Naive thymus-derived CD8-positive, alpha-beta T cell (primary cell): ENCODE measurements at regions of chr13 and their contacts with region 1.

Region 1: DNA sequence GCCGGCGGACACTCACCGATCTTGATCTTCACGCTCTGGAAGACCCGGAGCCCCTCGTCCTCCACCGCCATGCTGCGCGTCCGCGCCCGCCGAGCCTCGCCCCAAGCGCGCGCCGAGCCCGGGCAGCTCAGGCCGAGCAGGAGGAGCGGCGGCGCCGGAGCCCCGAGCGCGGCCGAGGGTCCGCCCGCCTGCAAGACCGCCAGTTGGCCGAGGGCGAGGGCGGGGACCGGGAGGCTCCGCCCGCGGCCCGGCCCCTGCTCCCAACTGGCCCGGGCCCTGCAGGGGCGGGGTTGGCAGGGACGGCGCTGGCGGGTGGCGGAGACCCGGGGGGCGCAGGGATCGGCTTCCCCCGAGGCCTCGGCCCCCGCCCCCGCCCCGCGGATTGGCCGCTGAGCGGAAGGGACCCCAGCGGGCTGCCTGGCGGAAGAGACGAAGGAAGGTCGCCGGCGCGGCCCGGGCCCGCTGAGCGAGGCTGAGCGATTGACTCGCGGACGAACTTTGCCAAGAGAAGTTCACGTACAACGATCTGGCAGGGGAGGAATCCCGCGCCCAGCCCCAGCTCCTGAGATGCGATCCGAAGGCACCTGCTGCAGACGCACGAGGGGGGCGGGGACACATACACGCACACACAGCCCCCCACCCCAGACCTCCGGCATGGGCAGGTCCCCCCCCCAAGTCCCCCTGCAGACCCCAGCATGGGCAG is at the start of gene RASA3:
- DNase-seq: peak; percentile 45 to 77 (median 62)
- ATAC-seq: peak; percentile 27 to 40
- H3K4me3 Mint-ChIP-seq: peak within 1 kb of the TSS; percentile 94 to 100 (median 98)
- H3K27ac Mint-ChIP-seq: peak within 1 kb of the TSS; percentile 88 to 100 (median 98)
- H3K4me1 Mint-ChIP-seq: peaks cover 37 to 67% (median 58%) of the 10 kb centered on the region in 4 donors
- H3K27me3 Mint-ChIP-seq: peaks cover 0 to 2% (median 0%) of the 10 kb centered on the region in 5 donors
- polyA plus RNA-seq, gene RASA3: 62.2 to 169 (median 105) TPM

Region 2: GRCh38 chr13:114065141-114065925 is 67.2 kb before region 1 on chr13:
- POLR2A ChIA-PET with region 1: interaction called, 21 read pairs
- DNase-seq: peak; percentile 39 to 77 (median 62)
- ATAC-seq: peak; percentile 70 to 74
- H3K4me3 Mint-ChIP-seq: peak overlapping the region; percentile 84 to 93 (median 86)
- H3K27ac Mint-ChIP-seq: peak overlapping the region; percentile 91 to 99 (median 96)
- H3K4me1 Mint-ChIP-seq: peaks cover 36 to 70% (median 67%) of the 10 kb centered on the region in 4 donors
- H3K27me3 Mint-ChIP-seq: no peaks in the 10 kb centered on the region

Region 3: DNA sequence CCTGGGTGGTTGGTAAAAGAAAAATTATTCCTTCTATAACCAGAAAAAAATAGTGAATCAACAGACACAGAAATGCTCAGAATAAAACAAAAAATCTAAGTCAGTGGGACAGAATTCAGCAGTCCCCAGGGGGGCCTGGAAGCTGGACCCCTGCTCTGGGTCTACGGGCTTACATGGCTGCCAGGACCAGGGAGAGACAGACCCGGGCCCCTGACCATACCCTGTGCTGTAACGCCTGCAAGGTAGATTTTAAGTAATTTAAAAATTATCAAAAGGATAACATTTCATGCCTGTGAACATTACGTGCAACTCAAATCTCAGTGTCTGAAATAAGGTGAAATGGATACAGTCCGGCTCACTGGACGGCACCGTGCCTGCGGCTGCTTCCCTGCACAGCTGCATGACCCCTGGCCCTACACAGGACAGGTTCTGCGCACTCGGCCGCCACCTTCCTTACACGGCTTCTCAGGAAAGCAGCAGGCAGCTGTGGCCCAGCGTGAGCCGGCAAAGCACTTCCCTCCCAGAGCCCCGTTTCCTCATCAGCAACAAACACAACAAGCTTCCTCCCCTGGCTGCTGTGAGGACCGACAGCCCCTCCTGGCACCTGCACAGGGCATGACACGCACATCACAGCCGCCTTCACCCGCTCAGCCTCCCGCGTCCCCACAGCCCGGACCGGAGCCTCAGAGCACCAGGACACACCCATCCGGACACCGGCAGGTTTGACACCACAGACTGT is 22.3 kb before region 1 on chr13:
- POLR2A ChIA-PET with region 1: interaction called, 207 read pairs
- DNase-seq: peak; percentile 64 to 92 (median 83)
- ATAC-seq: peak; percentile 82 to 87
- H3K4me3 Mint-ChIP-seq: peak overlapping the region; percentile 78 to 92 (median 86)
- H3K27ac Mint-ChIP-seq: peak overlapping the region; percentile 95 to 99 (median 98)
- H3K4me1 Mint-ChIP-seq: peaks cover 43 to 86% (median 82%) of the 10 kb centered on the region in 4 donors
- H3K27me3 Mint-ChIP-seq: peaks cover 0 to 1% (median 0%) of the 10 kb centered on the region in 5 donors

Region 4: DNA sequence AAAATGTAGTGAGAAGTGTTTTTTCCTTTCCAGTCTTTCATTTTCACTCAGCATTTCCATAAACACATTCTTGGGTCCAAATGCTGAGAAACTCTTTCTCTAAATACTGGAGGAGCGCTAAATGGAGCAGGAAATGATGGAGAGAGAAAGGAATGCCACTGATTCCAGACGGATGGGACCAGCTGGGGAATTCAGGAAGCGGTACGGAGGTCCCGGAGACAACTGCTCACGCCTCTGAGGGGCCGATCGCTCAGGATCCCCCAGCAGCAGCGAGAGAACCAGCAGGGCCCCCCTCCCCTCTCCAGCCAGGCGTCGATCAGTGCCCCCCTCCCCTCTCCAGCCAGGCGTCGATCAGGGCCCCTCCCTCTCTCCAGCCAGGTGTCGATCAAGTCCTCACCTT is 13.4 kb before region 1 on chr13:
- POLR2A ChIA-PET with region 1: interaction called, 207 read pairs
- DNase-seq: peak in 1 of 10 donors; percentile 11
- ATAC-seq: no peak
- H3K4me3 Mint-ChIP-seq: peak overlapping the region; percentile 56 to 88 (median 76)
- H3K27ac Mint-ChIP-seq: peak overlapping the region; percentile 81 to 95 (median 88)
- H3K4me1 Mint-ChIP-seq: peaks cover 43 to 84% (median 79%) of the 10 kb centered on the region in 4 donors
- H3K27me3 Mint-ChIP-seq: peaks cover 0 to 1% (median 0%) of the 10 kb centered on the region in 5 donors

Region 5: GRCh38 chr13:114151565-114152284 is 19.2 kb after region 1 on chr13:
- POLR2A ChIA-PET with region 1: interaction called, 191 read pairs
- DNase-seq: peak in 8 of 10 donors; percentile 33 to 82 (median 60)
- ATAC-seq: peak; percentile 26
- H3K4me3 Mint-ChIP-seq: peak overlapping the region; percentile 65 to 84 (median 79)
- H3K27ac Mint-ChIP-seq: peak overlapping the region in 9 of 10 donors; percentile 97 to 100 (median 99)
- H3K4me1 Mint-ChIP-seq: peaks cover 40 to 81% (median 77%) of the 10 kb centered on the region in 4 donors
- H3K27me3 Mint-ChIP-seq: no peaks in the 10 kb centered on the region

Region 6: DNA sequence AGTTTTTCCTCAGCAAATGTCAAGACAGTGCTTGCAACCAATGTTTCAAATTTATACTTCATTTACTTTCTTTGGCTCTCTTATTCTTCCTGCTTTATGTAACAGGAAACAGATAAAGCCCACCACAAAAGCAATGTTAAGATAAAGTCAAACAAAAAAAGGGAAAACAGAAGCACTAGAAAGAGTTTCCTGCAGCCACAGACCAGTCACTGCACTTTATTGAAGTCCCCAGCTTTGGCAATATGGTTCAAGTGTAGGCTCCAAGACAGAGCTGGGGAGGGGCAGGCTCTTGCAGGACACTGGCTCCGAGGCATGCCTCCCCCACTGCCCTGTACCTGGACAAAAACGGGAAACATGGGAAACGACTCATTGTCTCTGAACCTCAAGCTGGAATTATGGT is 86.8 kb after region 1 on chr13:
- POLR2A ChIA-PET with region 1: interaction called, 38 read pairs
- DNase-seq: peak in 3 of 10 donors; percentile 47 to 58 (median 56)
- ATAC-seq: peak; percentile 79 to 86
- H3K4me3 Mint-ChIP-seq: peak overlapping the region; percentile 39 to 81 (median 71)
- H3K27ac Mint-ChIP-seq: peak overlapping the region; percentile 48 to 95 (median 85)
- H3K4me1 Mint-ChIP-seq: peaks cover 29 to 82% (median 74%) of the 10 kb centered on the region in 4 donors
- H3K27me3 Mint-ChIP-seq: peaks cover 0 to under 1% (median 0%) of the 10 kb centered on the region in 5 donors

Region 7: GRCh38 chr13:114226699-114227323 is 94.2 kb after region 1 on chr13:
- POLR2A ChIA-PET with region 1: interaction called, 38 read pairs
- DNase-seq: peak; percentile 69 to 89 (median 80)
- ATAC-seq: peak; percentile 81 to 87
- H3K4me3 Mint-ChIP-seq: peak overlapping the region; percentile 7 to 76 (median 58)
- H3K27ac Mint-ChIP-seq: peak overlapping the region; percentile 78 to 95 (median 88)
- H3K4me1 Mint-ChIP-seq: peaks cover 20 to 49% (median 49%) of the 10 kb centered on the region in 4 donors
- H3K27me3 Mint-ChIP-seq: peaks cover 0 to 7% (median 4%) of the 10 kb centered on the region in 5 donors